Activated CD4-positive, alpha-beta T cell treated with anti-CD3 and anti-CD28 coated beads, Interleukin-2, amount 10 ng/mL, durations not matched to agents 24 days and 14 days (primary cell): ENCODE measurements at regions of chr22 and their contacts with region 1.

Region 1: GRCh38 chr22:41976401-41976901 is 7.2 kb downstream of the SEPTIN3 start:
- DNase-seq: peak; percentile 91
- H3K4me3 Mint-ChIP-seq: peak overlapping the region; percentile 82
- H3K27ac Mint-ChIP-seq: peak overlapping the region; percentile 67
- H3K4me1 Mint-ChIP-seq: peaks cover 15% of the 10 kb centered on the region
- H3K27me3 Mint-ChIP-seq: peaks cover 48% of the 10 kb centered on the region

Region 2: GRCh38 chr22:41957941-41958556 is 18.4 kb before region 1 on chr22:
- intact Hi-C with region 1: loop called (anchors 1 kb)
- DNase-seq: no peak
- H3K4me3 Mint-ChIP-seq: no peak overlapping the region
- H3K27ac Mint-ChIP-seq: no peak overlapping the region
- H3K4me1 Mint-ChIP-seq: peaks cover 9% of the 10 kb centered on the region
- H3K27me3 Mint-ChIP-seq: no peaks in the 10 kb centered on the region

Region 3: DNA sequence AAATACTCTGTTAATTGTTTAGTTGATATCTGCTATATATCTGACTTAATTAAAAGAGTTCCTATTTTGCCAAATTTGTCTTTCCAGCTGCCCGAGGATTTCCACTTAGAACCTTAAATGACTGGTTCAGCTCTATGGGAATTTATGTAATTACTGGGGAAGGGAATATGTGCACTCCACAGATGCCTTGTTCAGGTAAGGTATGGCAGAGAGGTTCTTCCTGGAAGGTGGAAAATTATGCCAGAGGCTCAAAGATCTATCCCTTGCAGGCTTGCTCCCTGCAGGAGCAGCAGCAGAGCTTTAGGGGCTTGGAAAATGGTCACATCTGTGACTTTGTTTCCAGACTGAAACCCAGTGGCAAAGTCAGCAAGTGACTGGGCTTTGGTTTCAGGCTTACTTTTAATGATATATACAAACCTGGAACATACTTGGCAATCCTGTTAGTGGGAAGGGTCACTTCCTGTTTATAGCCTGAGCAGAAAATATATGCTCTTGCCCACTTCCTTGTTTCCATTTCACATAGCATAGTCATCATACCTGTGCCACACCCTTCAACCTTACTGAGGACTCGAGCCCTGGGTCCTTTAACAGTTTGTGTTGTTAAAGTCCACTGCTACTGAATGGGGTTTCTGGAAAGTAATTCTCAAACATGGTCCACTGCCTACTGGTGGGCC is 45.8 kb after region 1 on chr22:
- intact Hi-C with region 1: no loop called
- DNase-seq: peak; percentile 66
- H3K4me3 Mint-ChIP-seq: peak overlapping the region; percentile 19
- H3K27ac Mint-ChIP-seq: peak overlapping the region; percentile 65
- H3K4me1 Mint-ChIP-seq: peaks cover 12% of the 10 kb centered on the region
- H3K27me3 Mint-ChIP-seq: no peaks in the 10 kb centered on the region